Sigmoid colon (tissue), 7 donors: ENCODE measurements at regions of chr19 and their contacts with region 1.

Region 1: GRCh38 chr19:36378625-36379509 is at the start of gene ZFP14:
- DNase-seq: peak; percentile 95
- H3K4me3 ChIP-seq: peak within 1 kb of the TSS; percentile 70 to 79 (median 74)
- H3K27ac ChIP-seq: peak within 1 kb of the TSS; percentile 85 to 88 (median 86)
- H3K4me1 ChIP-seq: peaks cover 0 to 22% (median 13%) of the 10 kb centered on the region in 4 donors
- H3K27me3 ChIP-seq: no peaks in the 10 kb centered on the region
- CTCF ChIP-seq: no peak
- EP300 ChIP-seq: no peak
- POLR2A ChIP-seq: peak; percentile 72 to 80
- total RNA-seq, gene ZFP14: 3.5 to 13.3 (median 7.6) TPM

Region 2: GRCh38 chr19:36132489-36132891 is 246.4 kb before region 1 on chr19:
- intact Hi-C with region 1: loop called (anchors 5 kb)
- DNase-seq: no peak
- H3K4me3 ChIP-seq: no peak overlapping the region
- H3K27ac ChIP-seq: no peak overlapping the region
- H3K4me1 ChIP-seq: peaks cover 0 to 26% (median 22%) of the 10 kb centered on the region in 4 donors
- H3K27me3 ChIP-seq: no peaks in the 10 kb centered on the region
- CTCF ChIP-seq: no peak
- EP300 ChIP-seq: no peak
- POLR2A ChIP-seq: no peak

Region 3: GRCh38 chr19:36207605-36208252 is 171.1 kb before region 1 on chr19:
- intact Hi-C with region 1: no loop called
- DNase-seq: no peak
- H3K4me3 ChIP-seq: no peak overlapping the region
- H3K27ac ChIP-seq: no peak overlapping the region
- H3K4me1 ChIP-seq: no peaks in the 10 kb centered on the region
- H3K27me3 ChIP-seq: no peaks in the 10 kb centered on the region
- CTCF ChIP-seq: no peak
- EP300 ChIP-seq: no peak
- POLR2A ChIP-seq: no peak

Region 4: DNA sequence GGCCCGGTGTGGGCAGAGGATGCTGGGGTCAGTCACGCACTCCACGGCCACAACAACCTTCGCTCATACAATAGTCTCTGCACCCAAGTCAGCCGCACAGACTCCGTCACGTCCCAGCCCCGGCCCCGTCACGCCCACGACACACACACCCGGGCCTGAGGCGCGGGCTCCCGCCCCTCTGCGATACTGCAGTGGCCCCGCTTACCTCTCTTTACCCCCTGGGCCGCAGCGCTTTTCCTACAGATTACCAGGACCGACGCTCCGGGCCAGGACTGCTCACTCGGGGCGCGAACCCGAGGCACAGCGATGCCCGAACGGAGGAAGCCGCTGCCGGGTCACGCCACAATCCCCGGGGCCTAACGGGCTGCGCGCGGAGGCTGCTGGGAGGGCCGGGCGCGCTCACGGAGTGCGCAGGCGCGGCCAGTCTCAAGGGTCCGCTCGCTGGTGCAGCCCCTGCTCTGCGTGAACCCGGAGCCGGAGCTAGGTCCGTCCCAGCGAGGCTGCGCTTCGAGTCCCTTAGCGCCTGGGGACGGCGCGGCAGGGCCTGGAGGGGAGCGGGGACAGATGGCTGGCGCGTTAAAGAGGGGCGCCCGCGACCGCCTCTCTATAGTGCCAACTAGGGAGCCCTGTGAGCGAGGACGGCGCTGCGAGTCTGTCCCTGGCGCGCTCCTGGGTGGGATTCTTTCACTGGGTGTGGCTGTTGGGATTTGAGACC is 39.6 kb after region 1 on chr19 and contains the start of gene ZFP82:
- intact Hi-C with region 1: loop called (anchors 5 kb)
- DNase-seq: peak; percentile 85
- H3K4me3 ChIP-seq: peak within 1 kb of the TSS; percentile 63 to 82 (median 70)
- H3K27ac ChIP-seq: peak within 1 kb of the TSS; percentile 92 to 97 (median 93)
- H3K4me1 ChIP-seq: peaks cover 0 to 25% (median 20%) of the 10 kb centered on the region in 4 donors
- H3K27me3 ChIP-seq: peaks cover 0 to 4% (median 3%) of the 10 kb centered on the region in 3 donors
- CTCF ChIP-seq: no peak
- EP300 ChIP-seq: no peak
- POLR2A ChIP-seq: peak; percentile 35 to 63
- total RNA-seq, gene ZFP82: 4.8 to 8.2 (median 6.9) TPM

Region 5: GRCh38 chr19:36652958-36653357 is 274.1 kb after region 1 on chr19:
- intact Hi-C with region 1: no loop called
- DNase-seq: no peak
- H3K4me3 ChIP-seq: no peak overlapping the region
- H3K27ac ChIP-seq: no peak overlapping the region
- H3K4me1 ChIP-seq: no peaks in the 10 kb centered on the region
- H3K27me3 ChIP-seq: no peaks in the 10 kb centered on the region
- CTCF ChIP-seq: no peak
- EP300 ChIP-seq: no peak
- POLR2A ChIP-seq: no peak